Activated naive CD4-positive, alpha-beta T cell treated with anti-CD3 and anti-CD28 coated beads for 36 hours (primary cell): ENCODE measurements at regions of chr5 and their contacts with region 1.

Region 1: GRCh38 chr5:141664732-141665461 is 13.7 kb upstream of the FCHSD1 start:
- DNase-seq: peak; percentile 84
- H3K4me3 Mint-ChIP-seq: no peak overlapping the region
- H3K27ac Mint-ChIP-seq: no peak overlapping the region
- H3K4me1 Mint-ChIP-seq: peaks cover 2% of the 10 kb centered on the region
- H3K27me3 Mint-ChIP-seq: no peaks in the 10 kb centered on the region

Region 2: DNA sequence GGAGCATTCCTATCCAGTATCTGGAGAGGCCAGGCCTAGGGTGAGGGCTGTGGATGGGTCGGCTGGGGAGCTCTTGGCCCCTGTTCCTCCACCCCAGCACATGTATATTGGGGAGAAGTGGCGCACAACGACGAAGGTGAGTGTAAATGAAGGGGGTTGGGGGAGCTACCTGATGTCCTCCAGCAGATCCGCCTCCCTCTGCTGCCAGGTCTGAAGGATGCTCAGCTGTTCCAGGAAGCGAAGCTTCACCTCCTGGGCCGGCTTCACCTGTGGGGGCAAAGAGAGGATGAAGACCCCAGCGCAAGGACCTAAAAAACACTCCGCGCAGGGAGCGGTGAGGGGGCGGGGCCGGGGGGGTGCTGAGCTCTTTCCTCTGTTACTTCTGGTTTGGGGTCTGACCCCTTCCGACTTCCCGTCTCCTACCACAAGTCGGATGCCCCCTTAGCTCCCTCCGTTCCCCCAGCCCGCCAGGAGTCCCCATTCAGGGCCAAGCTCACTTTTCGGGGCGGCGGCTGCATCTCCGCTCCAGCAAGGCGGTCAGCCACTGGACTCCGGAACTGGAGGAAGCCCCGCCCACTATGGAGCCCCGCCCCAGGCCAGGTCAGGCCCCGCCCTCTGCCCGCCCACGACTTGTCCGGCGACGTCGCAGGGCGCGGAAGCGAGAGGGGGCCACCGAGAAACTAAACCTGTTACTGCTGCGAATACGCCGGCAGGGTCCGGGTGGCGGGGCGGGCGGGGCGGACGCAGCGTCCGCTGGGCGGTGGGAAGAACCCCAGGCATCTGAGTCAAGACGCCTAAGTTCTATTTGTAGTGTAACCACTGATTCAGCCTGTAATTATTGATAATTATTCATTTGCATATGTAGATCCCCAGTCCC is 13.8 kb before region 1 on chr5 and contains the start of gene FCHSD1:
- CTCF ChIA-PET with region 1: interaction called, 14 read pairs
- intact Hi-C with region 1: no loop called
- DNase-seq: peak; percentile 86
- H3K4me3 Mint-ChIP-seq: peak within 1 kb of the TSS; percentile 89
- H3K27ac Mint-ChIP-seq: peak within 1 kb of the TSS; percentile 84
- H3K4me1 Mint-ChIP-seq: peaks cover 18% of the 10 kb centered on the region
- H3K27me3 Mint-ChIP-seq: no peaks in the 10 kb centered on the region
- total RNA-seq, gene FCHSD1: 28.9 to 29.6 TPM

Region 3: DNA sequence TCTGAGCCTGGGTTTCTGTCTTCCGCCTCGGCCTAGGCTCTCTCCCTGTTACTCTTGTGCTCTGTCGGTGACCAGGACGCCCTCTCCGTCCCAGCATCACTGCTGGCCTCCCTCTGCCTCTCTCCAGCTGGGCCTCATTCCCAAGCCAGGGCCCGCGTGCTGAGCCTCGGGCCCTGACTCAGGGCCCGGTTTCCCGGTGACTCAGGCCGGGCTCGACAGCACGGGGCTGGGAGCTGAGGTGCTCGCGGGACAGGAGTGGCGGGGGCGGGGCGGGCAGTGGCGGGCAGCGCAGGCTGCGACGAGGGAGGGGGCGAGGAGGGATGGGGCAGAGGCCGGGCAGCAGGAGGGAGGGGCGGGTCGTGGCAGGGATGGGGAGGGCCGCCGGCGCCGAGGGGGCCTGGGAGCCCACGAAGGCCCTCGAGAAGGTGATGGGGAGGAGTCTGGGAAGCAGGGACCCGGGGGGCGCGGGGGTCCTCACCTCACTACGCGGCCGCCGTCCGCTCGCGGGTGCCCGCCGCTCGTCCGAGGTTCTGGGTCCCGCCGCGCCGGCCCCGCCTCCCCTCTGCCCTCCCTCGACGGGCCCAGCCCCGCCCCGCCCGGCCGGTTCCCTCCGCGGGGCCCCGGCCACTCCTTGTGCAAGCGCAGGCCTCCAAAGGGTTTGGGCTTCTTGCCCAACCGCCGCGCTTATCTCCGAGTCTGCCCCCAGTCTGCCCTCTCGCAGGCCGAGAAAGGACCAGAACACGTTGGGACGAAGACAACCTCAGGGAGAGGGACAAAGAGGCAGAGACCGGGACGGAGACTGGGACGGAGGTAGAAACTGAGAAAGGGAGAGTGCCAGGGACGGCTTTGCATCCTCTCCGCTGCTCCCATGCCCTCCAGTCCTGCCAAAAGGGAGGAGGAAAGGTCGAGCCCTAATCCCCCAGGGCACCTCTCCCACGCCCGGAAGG is 17.1 kb after region 1 on chr5 and contains the start of gene ARAP3:
- CTCF ChIA-PET with region 1: interaction called, 7 read pairs
- intact Hi-C with region 1: loop called (anchors 1 kb)
- DNase-seq: peak; percentile 41
- H3K4me3 Mint-ChIP-seq: peak within 1 kb of the TSS; percentile 63
- H3K27ac Mint-ChIP-seq: peak within 1 kb of the TSS; percentile 25
- H3K4me1 Mint-ChIP-seq: peaks cover 18% of the 10 kb centered on the region
- H3K27me3 Mint-ChIP-seq: no peaks in the 10 kb centered on the region
- total RNA-seq, gene ARAP3: 1.2 to 2.2 TPM

Region 4: GRCh38 chr5:141701360-141702119 is 36.6 kb after region 1 on chr5:
- CTCF ChIA-PET with region 1: interaction called, 4 read pairs
- intact Hi-C with region 1: loop called (anchors 2 kb)
- DNase-seq: peak; percentile 36
- H3K4me3 Mint-ChIP-seq: peak overlapping the region; percentile 67
- H3K27ac Mint-ChIP-seq: no peak overlapping the region
- H3K4me1 Mint-ChIP-seq: peaks cover 15% of the 10 kb centered on the region
- H3K27me3 Mint-ChIP-seq: peaks cover 21% of the 10 kb centered on the region

Region 5: DNA sequence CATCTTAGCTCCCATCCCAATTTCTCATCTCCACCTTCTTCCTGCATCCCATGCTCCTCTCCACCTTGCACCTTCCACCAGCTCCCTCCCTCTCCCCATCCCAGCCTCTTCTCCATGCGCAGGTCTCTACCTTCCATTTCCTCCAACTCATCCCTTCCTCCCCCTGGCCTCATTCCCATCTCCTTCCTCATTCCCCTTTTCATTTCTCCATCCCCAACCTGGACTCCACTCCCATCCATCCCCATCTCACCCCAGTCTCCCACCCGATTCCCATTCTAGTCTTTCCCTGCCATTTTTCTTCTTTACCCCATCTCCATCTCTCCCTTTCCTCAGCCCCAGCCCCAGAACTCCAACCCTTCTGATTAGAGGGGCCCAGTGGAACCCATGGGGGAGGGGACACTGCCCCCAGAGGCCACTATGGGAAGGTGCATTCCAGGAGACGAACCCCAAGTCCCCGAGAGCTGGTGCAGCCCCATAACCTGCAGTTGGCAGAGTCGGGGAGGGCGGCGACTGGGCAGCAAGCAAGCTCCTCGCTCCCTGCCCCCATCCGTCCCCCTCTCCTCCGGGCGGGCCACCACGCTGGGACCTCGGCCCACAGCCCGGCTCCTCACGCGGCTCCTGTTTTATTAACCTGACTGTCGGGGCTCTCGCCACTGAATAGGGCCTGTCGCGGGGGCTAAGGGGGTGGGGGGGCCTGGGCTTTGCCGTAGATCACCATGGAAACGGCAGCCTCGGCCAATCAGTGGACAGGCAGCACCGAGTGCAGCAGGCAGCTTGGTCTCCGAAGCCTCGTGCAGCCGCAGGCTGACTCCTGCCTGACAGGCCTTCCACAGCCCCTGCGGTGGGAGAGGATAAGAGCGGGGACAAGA is 146.6 kb after region 1 on chr5:
- CTCF ChIA-PET with region 1: interaction called, 4 read pairs
- intact Hi-C with region 1: loop called (anchors 2 kb)
- DNase-seq: peak; percentile 25
- H3K4me3 Mint-ChIP-seq: no peak overlapping the region
- H3K27ac Mint-ChIP-seq: no peak overlapping the region
- H3K4me1 Mint-ChIP-seq: no peaks in the 10 kb centered on the region
- H3K27me3 Mint-ChIP-seq: peaks cover 44% of the 10 kb centered on the region

Region 6: DNA sequence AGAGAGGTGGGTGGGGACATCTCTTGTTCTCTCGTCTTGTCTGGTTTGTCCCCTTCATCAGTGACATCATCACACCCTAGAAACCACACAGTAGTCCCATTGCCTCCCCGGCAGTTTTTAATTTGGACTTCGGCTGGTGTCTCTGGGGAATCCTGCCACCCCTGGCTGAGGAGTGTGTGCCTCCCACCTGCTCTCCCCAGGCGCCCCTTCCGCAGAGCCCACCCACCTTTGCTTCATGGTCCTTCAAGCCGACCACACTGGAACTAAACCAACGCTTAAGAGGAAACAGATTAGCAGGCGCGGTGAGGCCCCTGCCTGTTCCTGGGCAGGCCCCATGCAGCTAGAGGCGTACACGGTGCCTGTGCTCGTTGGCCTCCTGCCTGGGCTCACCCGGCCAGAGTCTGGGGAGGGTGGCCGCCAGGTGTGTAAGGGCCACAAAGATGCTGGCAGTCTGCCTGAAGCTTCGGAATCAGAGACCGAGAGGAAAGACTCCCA is 767.5 kb after region 1 on chr5:
- CTCF ChIA-PET with region 1: no interaction called
- intact Hi-C with region 1: no loop called
- DNase-seq: peak; percentile 56
- H3K4me3 Mint-ChIP-seq: peak overlapping the region; percentile 16
- H3K27ac Mint-ChIP-seq: peak overlapping the region; percentile 71
- H3K4me1 Mint-ChIP-seq: peaks cover 26% of the 10 kb centered on the region
- H3K27me3 Mint-ChIP-seq: no peaks in the 10 kb centered on the region